Activated CD4-positive, alpha-beta memory T cell treated with anti-CD3 and anti-CD28 coated beads for 36 hours (primary cell): ENCODE measurements at regions of chr17 and their contacts with region 1.

Region 1: GRCh38 chr17:45135192-45135977 is at the start of gene ACBD4:
- DNase-seq: peak; percentile 98
- H3K4me3 Mint-ChIP-seq: peak within 1 kb of the TSS; percentile 83
- H3K27ac Mint-ChIP-seq: peak within 1 kb of the TSS; percentile 67
- H3K4me1 Mint-ChIP-seq: peaks cover 13% of the 10 kb centered on the region
- H3K27me3 Mint-ChIP-seq: peaks cover 5% of the 10 kb centered on the region
- total RNA-seq, gene ACBD4: 12.5 to 13.8 TPM

Region 2: GRCh38 chr17:44385287-44386181 is 749.9 kb before region 1 on chr17:
- CTCF ChIA-PET with region 1: no interaction called
- POLR2A ChIA-PET with region 1: no interaction called
- intact Hi-C with region 1: no loop called
- DNase-seq: peak; percentile 95
- H3K4me3 Mint-ChIP-seq: peak overlapping the region; percentile 58
- H3K27ac Mint-ChIP-seq: no peak overlapping the region
- H3K4me1 Mint-ChIP-seq: peaks cover 10% of the 10 kb centered on the region
- H3K27me3 Mint-ChIP-seq: peaks cover 18% of the 10 kb centered on the region

Region 3: GRCh38 chr17:44775136-44775837 is 360.1 kb before region 1 on chr17:
- CTCF ChIA-PET with region 1: interaction called, 7 read pairs
- POLR2A ChIA-PET with region 1: no interaction called
- intact Hi-C with region 1: loop called (anchors 2 kb)
- DNase-seq: no peak
- H3K4me3 Mint-ChIP-seq: peak overlapping the region; percentile 80
- H3K27ac Mint-ChIP-seq: peak overlapping the region; percentile 42
- H3K4me1 Mint-ChIP-seq: peaks cover 5% of the 10 kb centered on the region
- H3K27me3 Mint-ChIP-seq: peaks cover 5% of the 10 kb centered on the region

Region 4: DNA sequence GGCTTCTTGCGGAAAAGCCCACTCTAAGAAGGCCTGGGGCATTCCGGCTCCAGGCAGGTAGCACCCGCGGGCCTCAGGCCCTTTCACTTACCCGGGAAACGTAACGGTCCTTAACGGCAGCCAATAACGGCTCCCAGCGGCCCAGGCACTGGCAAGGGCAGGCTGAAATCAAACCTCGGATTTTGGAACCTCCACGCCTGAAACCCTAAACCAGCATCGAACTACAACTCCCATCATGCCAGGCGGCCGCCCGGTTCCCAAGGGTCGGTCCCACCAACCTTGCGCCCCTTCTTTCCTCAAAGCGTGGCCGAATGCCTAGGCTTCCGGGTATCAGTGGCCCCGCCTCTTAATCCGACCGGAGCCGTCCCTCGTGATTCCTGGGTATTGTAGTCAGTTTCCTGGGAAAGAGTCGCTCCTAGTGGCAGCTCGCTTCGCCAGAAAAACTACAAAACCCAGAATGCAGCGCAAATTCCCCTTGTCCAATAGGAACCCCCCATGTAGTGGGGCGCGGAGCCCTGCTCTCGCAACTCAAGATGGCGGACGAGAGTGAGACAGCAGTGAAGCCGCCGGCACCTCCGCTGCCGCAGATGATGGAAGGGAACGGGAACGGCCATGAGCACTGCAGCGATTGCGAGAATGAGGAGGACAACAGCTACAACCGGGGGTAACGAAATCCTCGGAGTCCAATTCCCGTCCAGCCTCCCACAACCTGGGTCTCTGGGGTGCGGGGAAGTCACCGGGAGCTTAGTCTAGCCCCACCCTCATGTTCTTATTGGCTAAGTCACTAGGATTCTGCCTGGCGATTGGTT is 74.4 kb before region 1 on chr17 and contains the start of gene NMT1:
- CTCF ChIA-PET with region 1: interaction called, 22 read pairs
- POLR2A ChIA-PET with region 1: interaction called, 3 read pairs
- intact Hi-C with region 1: loop called (anchors 2 kb)
- DNase-seq: peak; percentile 98
- H3K4me3 Mint-ChIP-seq: peak within 1 kb of the TSS; percentile 100
- H3K27ac Mint-ChIP-seq: peak within 1 kb of the TSS; percentile 100
- H3K4me1 Mint-ChIP-seq: peaks cover 48% of the 10 kb centered on the region
- H3K27me3 Mint-ChIP-seq: no peaks in the 10 kb centered on the region
- total RNA-seq, gene NMT1: 158 TPM

Region 5: GRCh38 chr17:45123930-45124796 is 11.2 kb before region 1 on chr17:
- CTCF ChIA-PET with region 1: interaction called, 14 read pairs
- POLR2A ChIA-PET with region 1: no interaction called
- intact Hi-C with region 1: no loop called
- DNase-seq: peak; percentile 62
- H3K4me3 Mint-ChIP-seq: no peak overlapping the region
- H3K27ac Mint-ChIP-seq: no peak overlapping the region
- H3K4me1 Mint-ChIP-seq: no peaks in the 10 kb centered on the region
- H3K27me3 Mint-ChIP-seq: peaks cover 1% of the 10 kb centered on the region

Region 6: DNA sequence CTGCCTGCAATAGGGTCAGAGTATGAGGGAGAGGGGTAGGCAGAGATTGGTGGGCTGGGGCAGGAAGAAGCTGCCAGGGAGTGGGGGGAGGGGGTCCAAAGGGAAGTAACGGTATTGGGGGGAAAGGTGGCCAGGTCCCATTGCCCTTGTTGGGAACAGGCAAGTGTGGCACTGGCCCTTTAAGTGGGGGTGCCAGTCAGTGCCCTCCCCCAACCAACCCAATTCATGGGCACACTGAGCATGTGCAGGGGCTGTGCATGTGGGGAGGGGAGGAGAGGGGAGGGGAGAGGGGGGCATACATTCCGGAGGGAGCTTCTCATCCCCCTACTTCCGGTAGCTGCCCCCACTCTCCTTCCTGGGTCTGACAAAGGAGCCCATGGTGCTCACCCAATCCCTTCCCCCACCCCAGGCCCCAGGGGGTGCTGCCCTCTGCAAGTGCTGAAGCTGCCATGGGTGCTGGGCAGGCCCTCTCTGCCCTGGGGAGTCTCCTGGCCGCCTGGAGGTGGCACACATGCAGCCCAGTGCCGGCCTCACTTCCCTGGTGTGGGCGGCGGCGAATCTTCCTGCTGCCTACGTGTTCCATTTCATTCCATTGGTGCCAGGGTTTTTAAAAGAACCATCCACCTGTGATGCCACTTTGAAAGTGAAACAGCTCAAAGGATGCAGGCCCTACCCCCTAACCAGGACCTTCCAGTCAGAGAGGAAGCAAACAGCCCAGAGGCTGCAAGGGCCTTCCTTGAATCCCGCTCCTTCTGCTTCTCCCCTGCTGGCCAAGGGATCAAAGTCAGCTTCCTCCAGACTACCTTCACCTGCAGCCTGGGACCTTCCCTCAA is 37.3 kb after region 1 on chr17:
- CTCF ChIA-PET with region 1: interaction called, 36 read pairs
- POLR2A ChIA-PET with region 1: no interaction called
- intact Hi-C with region 1: no loop called
- DNase-seq: peak; percentile 68
- H3K4me3 Mint-ChIP-seq: peak overlapping the region; percentile 54
- H3K27ac Mint-ChIP-seq: peak overlapping the region; percentile 82
- H3K4me1 Mint-ChIP-seq: peaks cover 11% of the 10 kb centered on the region
- H3K27me3 Mint-ChIP-seq: no peaks in the 10 kb centered on the region

Region 7: GRCh38 chr17:45218895-45219661 is 83.7 kb after region 1 on chr17:
- CTCF ChIA-PET with region 1: interaction called, 45 read pairs
- POLR2A ChIA-PET with region 1: no interaction called
- intact Hi-C with region 1: no loop called
- DNase-seq: peak; percentile 91
- H3K4me3 Mint-ChIP-seq: peak overlapping the region; percentile 81
- H3K27ac Mint-ChIP-seq: peak overlapping the region; percentile 73
- H3K4me1 Mint-ChIP-seq: peaks cover 30% of the 10 kb centered on the region
- H3K27me3 Mint-ChIP-seq: no peaks in the 10 kb centered on the region